HepG2 (cell line): ENCODE measurements at regions of chr5 and their contacts with region 1.

Region 1: DNA sequence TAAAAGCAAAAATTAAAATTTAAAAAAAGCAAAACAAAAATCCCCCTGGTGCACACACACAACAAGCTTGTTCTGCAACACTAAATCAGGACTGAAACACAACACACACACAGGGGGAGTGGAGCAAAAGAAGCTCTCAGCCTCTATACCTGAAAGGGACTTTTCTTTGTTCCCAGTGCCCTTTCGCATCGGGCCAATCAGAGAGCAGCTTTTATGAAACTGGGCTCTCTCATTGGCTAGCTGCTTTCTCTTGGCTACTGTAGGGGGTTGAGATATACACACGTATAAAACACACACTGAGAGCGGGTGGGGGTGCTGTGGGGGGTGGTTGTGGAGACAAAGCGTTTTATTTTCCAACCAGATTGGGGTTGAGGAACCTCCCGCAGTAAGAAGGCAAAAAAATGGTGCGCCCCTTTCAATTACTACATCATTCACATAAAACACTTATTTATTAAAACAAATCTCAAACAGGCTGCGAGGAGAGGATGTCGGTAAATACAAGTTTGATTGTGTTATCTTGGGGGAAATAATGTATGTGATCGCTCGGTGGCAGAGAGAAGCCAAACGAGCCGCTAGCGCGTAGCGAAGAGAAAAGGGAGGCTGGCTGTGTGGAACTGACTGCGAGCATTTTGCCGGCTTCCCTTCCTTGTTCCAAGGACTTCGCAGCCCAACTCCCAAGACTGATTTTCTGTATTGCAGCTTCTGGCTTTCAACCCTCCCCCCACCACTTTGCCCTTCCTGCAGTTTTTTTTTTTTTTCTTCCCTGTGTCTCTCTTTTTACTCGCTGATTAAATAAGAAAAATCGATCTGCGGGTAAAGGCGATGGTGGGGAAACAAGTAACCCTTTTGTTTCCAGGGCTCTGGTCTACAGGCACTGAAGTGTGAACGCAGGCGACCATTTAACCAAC is 2.5 kb upstream of the ZNF608 start:
- DNase-seq: peak; percentile 81
- ATAC-seq: peak; percentile 93
- H3K4me3 ChIP-seq: peak overlapping the region; percentile 49 to 73 (median 68)
- H3K27ac ChIP-seq: peak overlapping the region; percentile 71
- H3K4me1 ChIP-seq: peaks cover 29% of the 10 kb centered on the region
- H3K27me3 ChIP-seq: peaks cover 0 to 27% of the 10 kb centered on the region in 2 experiments; a peak in 3 of 5 replicates
- CTCF ChIP-seq: no peak
- EP300 ChIP-seq: peak in 1 of 2 experiments; percentile 87; a peak in 2 of 4 replicates
- POLR2A ChIP-seq: peak in 1 of 2 experiments; percentile 11; a peak in 1 of 4 replicates
- RAD21 ChIP-seq: no peak

Region 2: DNA sequence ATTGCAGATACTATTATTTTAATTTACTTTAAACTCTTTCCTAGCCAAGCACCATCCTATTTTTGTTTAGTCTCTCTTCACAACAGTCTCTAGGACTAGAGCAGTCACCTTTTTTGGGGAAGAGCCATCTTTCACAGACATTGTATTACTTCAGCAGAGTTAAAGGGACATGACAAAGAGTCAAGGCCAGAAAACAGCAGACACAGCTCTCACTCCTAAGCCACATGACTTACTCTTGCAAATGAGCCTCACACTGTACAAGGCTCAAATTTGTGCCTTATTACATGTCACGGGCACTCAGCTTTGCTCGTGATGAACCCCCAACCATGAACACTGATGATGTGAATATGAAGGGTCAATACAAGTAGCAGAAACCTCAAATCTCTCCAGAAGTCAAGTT is 106.8 kb before region 1 on chr5:
- CTCF ChIA-PET with region 1: no interaction called
- POLR2A ChIA-PET with region 1: no interaction called
- in situ Hi-C with region 1: no loop called
- intact Hi-C with region 1: no loop called
- DNase-seq: no peak
- ATAC-seq: no peak
- H3K4me3 ChIP-seq: no peak overlapping the region
- H3K27ac ChIP-seq: no peak overlapping the region
- H3K4me1 ChIP-seq: peaks cover 53% of the 10 kb centered on the region
- H3K27me3 ChIP-seq: no peaks in the 10 kb centered on the region
- CTCF ChIP-seq: no peak
- EP300 ChIP-seq: no peak
- POLR2A ChIP-seq: no peak
- RAD21 ChIP-seq: no peak

Region 3: GRCh38 chr5:124655922-124656511 is 92.9 kb before region 1 on chr5:
- CTCF ChIA-PET with region 1: no interaction called
- POLR2A ChIA-PET with region 1: interaction called, 15 read pairs
- in situ Hi-C with region 1: no loop called
- intact Hi-C with region 1: loop called (anchors 2 kb)
- DNase-seq: peak; percentile 97
- ATAC-seq: peak; percentile 86
- H3K4me3 ChIP-seq: peak overlapping the region in 2 of 3 experiments; percentile 8 to 22; a peak in 2 of 6 replicates
- H3K27ac ChIP-seq: peak overlapping the region; percentile 60
- H3K4me1 ChIP-seq: peaks cover 96% of the 10 kb centered on the region
- H3K27me3 ChIP-seq: no peaks in the 10 kb centered on the region
- CTCF ChIP-seq: no peak
- EP300 ChIP-seq: peak in 1 of 2 experiments; percentile 81; a peak in 2 of 4 replicates
- POLR2A ChIP-seq: no peak
- RAD21 ChIP-seq: no peak